Caco-2 (cell line): ENCODE measurements at regions of chr10 and their contacts with region 1.

Region 1: GRCh38 chr10:110414563-110415309 is 83.0 kb upstream of the DUSP5 start:
- DNase-seq: peak in 1 of 2 experiments; percentile 51
- H3K4me3 ChIP-seq: no peak overlapping the region
- H3K4me3 Mint-ChIP-seq: no peak overlapping the region
- H3K27ac Mint-ChIP-seq: peak overlapping the region; percentile 84
- H3K4me1 ChIP-seq: peaks cover 61% of the 10 kb centered on the region
- H3K4me1 Mint-ChIP-seq: peaks cover 46% of the 10 kb centered on the region
- H3K27me3 ChIP-seq: no peaks in the 10 kb centered on the region
- H3K27me3 Mint-ChIP-seq: no peaks in the 10 kb centered on the region
- CTCF ChIP-seq: no peak

Region 2: DNA sequence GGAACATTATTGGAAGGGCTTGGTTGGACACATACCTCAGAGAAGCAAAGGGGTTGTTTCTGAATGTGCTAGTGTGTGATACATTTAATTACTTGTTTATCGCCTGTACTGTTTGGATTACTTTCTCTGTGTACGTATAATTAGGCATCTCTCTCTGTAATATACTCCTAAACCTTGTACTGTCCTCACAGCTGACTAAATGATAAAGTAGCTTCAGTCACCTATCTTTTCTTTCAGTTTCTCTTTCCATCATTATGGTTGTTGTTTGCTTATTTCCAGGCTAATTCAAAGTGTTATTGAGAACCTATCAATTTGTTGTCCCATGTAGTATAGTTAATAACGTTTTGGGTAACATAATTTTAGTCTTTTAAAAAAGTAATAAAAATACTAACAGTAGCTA is 173.3 kb before region 1 on chr10:
- CTCF ChIA-PET with region 1: no interaction called
- POLR2A ChIA-PET with region 1: no interaction called
- intact Hi-C with region 1: no loop called
- DNase-seq: no peak
- H3K4me3 ChIP-seq: no peak overlapping the region
- H3K4me3 Mint-ChIP-seq: no peak overlapping the region
- H3K27ac Mint-ChIP-seq: no peak overlapping the region
- H3K4me1 ChIP-seq: no peaks in the 10 kb centered on the region
- H3K4me1 Mint-ChIP-seq: peaks cover 7% of the 10 kb centered on the region
- H3K27me3 ChIP-seq: no peaks in the 10 kb centered on the region
- H3K27me3 Mint-ChIP-seq: no peaks in the 10 kb centered on the region
- CTCF ChIP-seq: no peak

Region 3: DNA sequence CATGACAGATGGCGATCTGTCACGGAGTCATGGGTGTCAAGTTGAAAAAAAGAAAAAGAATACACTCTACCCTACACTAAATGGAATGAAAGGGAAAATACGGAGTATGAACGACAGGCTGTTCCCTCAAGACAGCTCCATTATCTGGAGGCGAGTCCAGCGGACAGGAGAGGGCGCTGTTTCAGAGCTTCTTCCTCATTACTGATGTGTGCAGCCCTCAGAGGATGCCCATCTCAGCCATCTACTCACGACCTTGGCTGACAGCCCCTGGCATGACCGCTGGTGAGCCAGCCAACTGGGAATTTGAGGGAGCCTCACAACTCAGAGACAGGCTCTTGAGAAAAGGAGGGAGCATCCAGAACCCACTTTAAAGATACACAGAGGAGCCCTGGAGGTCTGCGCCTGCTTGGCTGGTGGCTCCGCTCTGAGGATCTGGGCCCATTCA is 60.4 kb before region 1 on chr10:
- CTCF ChIA-PET with region 1: no interaction called
- POLR2A ChIA-PET with region 1: no interaction called
- intact Hi-C with region 1: loop called (anchors 10 kb)
- DNase-seq: peak; percentile 75
- H3K4me3 ChIP-seq: no peak overlapping the region
- H3K4me3 Mint-ChIP-seq: no peak overlapping the region
- H3K27ac Mint-ChIP-seq: no peak overlapping the region
- H3K4me1 ChIP-seq: peaks cover 31% of the 10 kb centered on the region
- H3K4me1 Mint-ChIP-seq: peaks cover 7% of the 10 kb centered on the region
- H3K27me3 ChIP-seq: no peaks in the 10 kb centered on the region
- H3K27me3 Mint-ChIP-seq: no peaks in the 10 kb centered on the region
- CTCF ChIP-seq: peak; percentile 58 to 72

Region 4: GRCh38 chr10:110378006-110378405 is 36.7 kb before region 1 on chr10:
- CTCF ChIA-PET with region 1: no interaction called
- POLR2A ChIA-PET with region 1: no interaction called
- intact Hi-C with region 1: loop called (anchors 1 kb)
- DNase-seq: no peak
- H3K4me3 ChIP-seq: no peak overlapping the region
- H3K4me3 Mint-ChIP-seq: no peak overlapping the region
- H3K27ac Mint-ChIP-seq: peak overlapping the region; percentile 68
- H3K4me1 ChIP-seq: peaks cover 26% of the 10 kb centered on the region
- H3K4me1 Mint-ChIP-seq: peaks cover 26% of the 10 kb centered on the region
- H3K27me3 ChIP-seq: no peaks in the 10 kb centered on the region
- H3K27me3 Mint-ChIP-seq: no peaks in the 10 kb centered on the region
- CTCF ChIP-seq: no peak